HepG2 (cell line): ENCODE measurements at regions of chr16 and their contacts with region 1.

Region 1: GRCh38 chr16:48632137-48632774 is 22.3 kb upstream of the N4BP1 start:
- DNase-seq: peak; percentile 80
- ATAC-seq: peak; percentile 95
- H3K4me3 ChIP-seq: peak overlapping the region in 2 of 3 experiments; percentile 4 to 45; a peak in 3 of 6 replicates
- H3K27ac ChIP-seq: no peak overlapping the region
- H3K4me1 ChIP-seq: peaks cover 54% of the 10 kb centered on the region
- H3K27me3 ChIP-seq: no peaks in the 10 kb centered on the region; a peak in 1 of 5 replicates
- CTCF ChIP-seq: peak; percentile 55
- EP300 ChIP-seq: peak in 1 of 2 experiments; percentile 33; a peak in 1 of 4 replicates
- POLR2A ChIP-seq: no peak
- RAD21 ChIP-seq: no peak

Region 2: DNA sequence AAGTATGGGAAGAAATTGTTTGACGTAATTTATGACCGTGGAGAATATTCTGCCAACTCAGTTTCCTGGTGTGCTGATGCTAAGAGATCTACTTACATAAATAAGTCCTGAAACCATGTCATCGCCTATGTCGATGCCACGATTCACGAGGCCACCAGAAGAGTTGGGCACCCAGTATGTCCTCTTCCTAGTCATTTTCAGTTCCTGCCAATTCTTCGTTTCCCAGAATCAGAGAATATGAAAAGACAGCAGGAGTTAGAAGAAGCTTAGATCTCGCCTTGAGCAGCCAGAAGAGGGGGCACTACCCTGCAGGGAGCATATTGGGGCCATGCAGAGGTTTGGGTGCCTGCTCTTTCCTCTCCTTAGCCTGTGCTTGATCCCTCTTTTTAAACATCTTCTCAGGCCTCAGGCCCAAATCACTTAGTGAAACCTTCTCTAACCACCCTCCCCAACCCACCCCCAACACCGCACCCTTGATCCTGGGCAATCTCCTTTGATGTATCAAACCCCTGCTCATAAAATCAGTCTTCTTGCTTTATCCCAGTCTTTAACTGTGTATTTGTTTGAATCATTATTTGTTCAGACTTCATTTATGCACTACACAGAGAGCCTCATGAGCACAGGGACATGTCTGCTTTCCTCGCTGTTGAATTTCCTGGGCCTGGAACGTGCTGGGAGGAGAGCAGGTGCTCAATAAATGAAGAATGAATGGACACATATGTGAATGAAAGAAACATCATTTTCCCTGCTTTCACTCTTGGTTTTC is 400.3 kb before region 1 on chr16:
- CTCF ChIA-PET with region 1: no interaction called
- POLR2A ChIA-PET with region 1: no interaction called
- in situ Hi-C with region 1: no loop called
- intact Hi-C with region 1: loop called (anchors 5 kb)
- DNase-seq: peak; percentile 49
- ATAC-seq: peak; percentile 60
- H3K4me3 ChIP-seq: no peak overlapping the region
- H3K27ac ChIP-seq: no peak overlapping the region
- H3K4me1 ChIP-seq: peaks cover 65% of the 10 kb centered on the region
- H3K27me3 ChIP-seq: no peaks in the 10 kb centered on the region
- CTCF ChIP-seq: peak; percentile 76
- EP300 ChIP-seq: no peak
- POLR2A ChIP-seq: no peak
- RAD21 ChIP-seq: peak; percentile 76

Region 3: DNA sequence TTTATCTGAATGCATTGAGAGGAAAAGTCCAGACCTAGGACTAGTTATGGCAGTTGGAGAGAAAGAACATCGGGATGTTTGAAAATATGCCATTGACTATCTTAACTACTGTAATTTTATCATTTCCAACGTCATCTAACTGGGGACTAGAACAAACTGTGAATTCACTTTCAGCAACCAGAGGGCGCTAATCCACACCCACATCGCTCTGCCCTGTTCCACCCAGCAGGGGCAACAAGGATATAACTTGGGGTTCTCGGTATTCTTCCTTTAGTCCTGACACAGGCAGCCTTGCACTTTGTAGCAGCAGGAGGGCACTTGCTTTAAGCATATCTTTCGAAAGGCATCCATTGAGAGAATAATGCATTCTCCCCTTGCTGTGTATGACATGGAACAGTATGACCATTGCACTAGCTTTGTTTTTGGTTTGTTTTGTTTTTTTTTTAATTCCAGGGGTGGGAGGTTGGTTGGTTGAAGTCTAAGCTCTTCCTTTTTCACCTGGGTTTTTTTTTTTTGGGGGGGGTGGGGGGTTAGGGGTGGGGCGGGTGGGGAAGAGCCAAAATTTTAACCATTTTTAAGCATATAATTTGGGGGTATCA is 278.6 kb before region 1 on chr16:
- CTCF ChIA-PET with region 1: interaction called, 10 read pairs
- POLR2A ChIA-PET with region 1: interaction called, 3 read pairs
- in situ Hi-C with region 1: no loop called
- intact Hi-C with region 1: no loop called
- DNase-seq: peak; percentile 78
- ATAC-seq: peak; percentile 89
- H3K4me3 ChIP-seq: no peak overlapping the region
- H3K27ac ChIP-seq: no peak overlapping the region
- H3K4me1 ChIP-seq: no peaks in the 10 kb centered on the region
- H3K27me3 ChIP-seq: no peaks in the 10 kb centered on the region
- CTCF ChIP-seq: peak; percentile 90
- EP300 ChIP-seq: no peak
- POLR2A ChIP-seq: peak in 1 of 2 experiments; percentile 35; a peak in 1 of 4 replicates
- RAD21 ChIP-seq: peak; percentile 90

Region 4: GRCh38 chr16:48499923-48500381 is 132.3 kb before region 1 on chr16:
- CTCF ChIA-PET with region 1: no interaction called
- POLR2A ChIA-PET with region 1: no interaction called
- in situ Hi-C with region 1: no loop called
- intact Hi-C with region 1: loop called (anchors 1 kb)
- DNase-seq: no peak
- ATAC-seq: no peak
- H3K4me3 ChIP-seq: no peak overlapping the region
- H3K27ac ChIP-seq: no peak overlapping the region
- H3K4me1 ChIP-seq: peaks cover 30% of the 10 kb centered on the region
- H3K27me3 ChIP-seq: peaks cover 0 to 17% of the 10 kb centered on the region in 2 experiments; a peak in 2 of 5 replicates
- CTCF ChIP-seq: no peak
- EP300 ChIP-seq: no peak
- POLR2A ChIP-seq: no peak
- RAD21 ChIP-seq: no peak

Region 5: GRCh38 chr16:48535831-48536613 is 96.2 kb before region 1 on chr16:
- CTCF ChIA-PET with region 1: interaction called, 9 read pairs
- POLR2A ChIA-PET with region 1: no interaction called
- in situ Hi-C with region 1: no loop called
- intact Hi-C with region 1: loop called (anchors 1 kb)
- DNase-seq: peak; percentile 21
- ATAC-seq: peak; percentile 5
- H3K4me3 ChIP-seq: no peak overlapping the region
- H3K27ac ChIP-seq: no peak overlapping the region
- H3K4me1 ChIP-seq: peaks cover 39% of the 10 kb centered on the region
- H3K27me3 ChIP-seq: no peaks in the 10 kb centered on the region
- CTCF ChIP-seq: no peak
- EP300 ChIP-seq: no peak
- POLR2A ChIP-seq: no peak
- RAD21 ChIP-seq: no peak